ENCODE measurements at regions of chr12 and their contacts with region 1.

Region 1: DNA sequence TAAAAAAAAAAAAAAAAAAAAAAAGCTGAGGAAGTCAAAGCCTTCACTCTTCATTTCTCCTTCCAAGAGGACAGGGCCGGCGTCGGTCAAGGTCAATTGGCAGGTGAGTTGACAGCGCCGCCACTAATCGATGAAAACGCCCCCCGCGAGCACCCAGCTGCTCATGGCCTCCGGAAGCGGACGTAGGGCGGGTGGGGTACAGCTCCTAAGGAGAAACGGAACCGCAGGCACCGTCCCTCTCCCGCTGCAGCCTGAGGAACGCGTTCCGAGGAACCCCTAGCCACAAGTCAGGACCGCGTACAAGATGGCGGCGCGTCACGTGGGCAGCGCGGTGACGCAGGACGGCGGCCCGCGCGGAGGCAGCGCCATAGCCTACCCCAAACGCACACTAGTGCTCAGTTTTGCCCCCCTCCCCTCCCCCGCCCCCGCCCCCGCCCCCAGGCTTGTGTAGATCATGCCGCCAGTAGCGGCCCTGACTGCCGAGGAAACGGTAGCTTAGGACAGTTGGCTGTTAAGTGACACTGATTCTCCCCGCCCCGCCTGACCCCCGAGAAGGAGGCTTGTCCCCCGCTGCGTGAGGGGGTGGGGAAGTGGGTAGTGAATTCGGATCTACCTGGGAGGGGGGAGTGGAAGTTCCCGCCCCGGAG is at the start of gene ATF1:
- DNase-seq: peak; percentile 92
- ATAC-seq: peak; percentile 81
- H3K4me3 Mint-ChIP-seq: peak within 1 kb of the TSS; percentile 81
- H3K27ac Mint-ChIP-seq: peak within 1 kb of the TSS; percentile 89
- H3K4me1 Mint-ChIP-seq: peaks cover 30% of the 10 kb centered on the region
- H3K27me3 Mint-ChIP-seq: no peaks in the 10 kb centered on the region
- total RNA-seq, gene ATF1: 35.4 to 36.7 TPM

Region 2: GRCh38 chr12:50677858-50678257 is 85.9 kb before region 1 on chr12:
- CTCF ChIA-PET with region 1: no interaction called
- POLR2A ChIA-PET with region 1: no interaction called
- DNase-seq: no peak
- ATAC-seq: no peak
- H3K4me3 Mint-ChIP-seq: no peak overlapping the region
- H3K27ac Mint-ChIP-seq: no peak overlapping the region
- H3K4me1 Mint-ChIP-seq: no peaks in the 10 kb centered on the region
- H3K27me3 Mint-ChIP-seq: no peaks in the 10 kb centered on the region

Region 3: DNA sequence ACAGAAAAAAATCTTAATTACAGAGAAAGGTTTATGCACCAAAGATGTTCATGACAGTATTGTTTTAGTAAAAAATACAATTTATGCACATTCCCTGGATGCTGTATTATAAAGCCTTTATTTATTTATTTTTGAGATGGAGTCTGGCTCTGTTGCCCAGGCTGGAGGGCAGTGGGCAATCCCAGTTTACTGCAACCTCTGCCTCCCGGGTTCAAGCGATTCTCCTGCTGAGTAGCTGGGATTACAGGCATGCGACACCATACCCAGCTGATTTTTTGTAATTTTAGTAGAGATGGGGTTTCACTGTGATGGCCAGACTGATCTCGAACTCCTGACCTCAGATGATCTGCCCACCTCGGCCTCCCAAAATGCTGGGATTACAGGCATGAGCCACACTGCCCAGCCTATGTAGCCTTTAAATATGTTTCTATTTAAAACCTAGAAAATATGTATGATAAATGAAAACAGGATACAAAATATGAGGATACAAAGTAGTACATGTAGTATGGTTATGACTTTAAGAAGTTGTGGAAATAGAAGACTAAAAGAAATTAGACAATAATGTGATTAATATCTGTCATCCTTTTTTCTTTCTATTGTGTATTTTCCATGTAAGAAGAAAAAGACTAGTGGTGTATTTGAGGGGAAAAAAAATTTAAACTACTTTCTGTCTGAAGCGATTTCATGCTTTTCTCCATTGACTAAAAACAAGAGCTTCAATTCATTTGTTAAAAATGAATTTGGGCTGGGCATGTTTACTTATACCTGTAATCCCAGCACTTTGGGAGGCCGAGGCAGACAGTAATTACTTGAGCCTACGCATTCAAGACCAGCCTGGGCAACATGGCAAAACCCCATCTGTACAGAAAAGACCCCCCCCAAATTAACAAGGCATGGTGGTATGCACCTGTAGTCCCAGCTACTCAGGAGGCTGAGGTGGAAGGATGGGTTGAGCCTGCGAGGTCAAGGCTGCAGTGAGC is 13.3 kb after region 1 on chr12:
- CTCF ChIA-PET with region 1: interaction called, 22 read pairs
- POLR2A ChIA-PET with region 1: interaction called, 10 read pairs
- DNase-seq: peak; percentile 10
- ATAC-seq: no peak
- H3K4me3 Mint-ChIP-seq: no peak overlapping the region
- H3K27ac Mint-ChIP-seq: no peak overlapping the region
- H3K4me1 Mint-ChIP-seq: no peaks in the 10 kb centered on the region
- H3K27me3 Mint-ChIP-seq: no peaks in the 10 kb centered on the region

Region 4: DNA sequence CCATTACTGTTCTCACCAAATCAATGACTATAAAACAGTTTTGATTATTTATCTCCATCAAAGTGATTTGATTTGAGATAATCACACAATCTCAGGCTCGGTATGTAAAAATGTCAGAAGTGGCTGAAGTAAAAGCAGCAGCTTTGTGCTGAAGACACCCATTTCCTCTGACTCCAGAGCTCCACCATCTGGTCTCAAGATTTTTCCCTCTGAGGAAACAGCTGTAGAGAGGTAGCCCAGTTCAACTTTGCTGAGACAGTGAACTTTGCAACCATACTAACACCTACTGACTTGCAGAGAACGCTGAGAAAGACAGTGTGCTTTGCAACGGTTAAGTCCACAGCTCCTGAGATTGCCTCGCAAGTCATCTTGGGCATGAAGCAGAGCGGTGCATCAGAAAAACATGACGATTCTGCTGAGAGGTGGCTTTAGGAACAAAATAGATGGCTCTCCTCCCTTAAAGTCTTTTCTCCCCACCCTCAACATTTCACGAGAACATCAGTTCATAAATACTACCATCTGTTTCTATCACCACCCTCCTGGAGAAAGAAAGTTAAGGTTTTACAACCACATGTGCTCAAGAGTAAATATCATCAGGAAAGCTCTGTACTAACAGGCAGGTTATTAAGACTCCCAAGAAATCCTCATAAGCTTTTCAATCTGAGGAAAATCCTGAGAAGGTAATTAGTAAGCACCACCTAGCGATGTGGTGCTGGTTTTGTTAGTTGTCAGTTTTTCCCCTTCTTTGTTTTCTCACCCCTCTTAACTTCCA is 223.4 kb after region 1 on chr12:
- CTCF ChIA-PET with region 1: interaction called, 67 read pairs
- POLR2A ChIA-PET with region 1: interaction called, 4 read pairs
- DNase-seq: peak; percentile 57
- ATAC-seq: peak; percentile 69
- H3K4me3 Mint-ChIP-seq: no peak overlapping the region
- H3K27ac Mint-ChIP-seq: peak overlapping the region; percentile 45
- H3K4me1 Mint-ChIP-seq: peaks cover 12% of the 10 kb centered on the region
- H3K27me3 Mint-ChIP-seq: no peaks in the 10 kb centered on the region

Region 5: DNA sequence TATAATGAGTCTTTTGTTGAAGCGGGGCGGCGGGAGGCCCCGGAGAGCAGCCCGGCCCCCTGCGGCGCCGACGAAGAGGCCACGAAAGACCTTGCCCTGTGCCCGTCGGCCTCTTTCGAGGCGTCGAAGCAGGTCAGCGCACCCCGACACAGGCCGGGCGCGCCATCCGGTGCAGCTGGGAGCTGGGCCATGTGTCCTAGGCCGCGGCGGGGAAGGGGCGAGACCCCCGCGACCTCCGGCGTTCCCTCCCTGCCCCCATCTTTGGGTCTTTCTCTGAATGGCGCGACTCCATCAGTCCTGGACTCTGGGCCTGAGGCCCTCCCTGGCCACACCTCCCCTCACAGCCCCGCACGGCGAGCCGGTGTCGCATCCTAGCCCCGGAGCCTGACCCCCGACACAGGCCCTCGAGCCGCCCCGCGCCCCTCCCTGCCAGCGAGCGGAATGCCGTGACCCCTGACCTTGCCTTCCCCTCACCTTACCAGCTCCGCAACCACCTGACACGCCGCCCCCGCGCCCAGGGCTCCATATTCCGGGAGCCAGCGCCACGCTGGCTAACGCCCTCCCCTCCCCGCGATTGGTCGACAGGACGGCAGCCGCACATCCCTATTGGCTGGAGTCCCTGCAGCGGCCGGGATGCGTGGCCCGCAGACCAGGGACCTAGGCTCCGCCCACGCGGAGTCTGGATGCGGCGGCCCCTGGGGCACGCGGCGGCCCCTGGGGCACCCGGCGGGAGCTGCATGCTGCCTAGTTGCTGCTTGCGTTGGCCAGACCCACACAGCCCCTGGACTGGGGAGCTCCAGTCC is 262.3 kb after region 1 on chr12 and contains the start of gene SLC11A2:
- CTCF ChIA-PET with region 1: interaction called, 53 read pairs
- POLR2A ChIA-PET with region 1: interaction called, 14 read pairs
- DNase-seq: peak; percentile 94
- ATAC-seq: peak; percentile 96
- H3K4me3 Mint-ChIP-seq: peak within 1 kb of the TSS; percentile 95
- H3K27ac Mint-ChIP-seq: peak within 1 kb of the TSS; percentile 97
- H3K4me1 Mint-ChIP-seq: peaks cover 50% of the 10 kb centered on the region
- H3K27me3 Mint-ChIP-seq: peaks cover 11% of the 10 kb centered on the region
- total RNA-seq, gene SLC11A2: 29.9 to 36.1 TPM

Region 6: DNA sequence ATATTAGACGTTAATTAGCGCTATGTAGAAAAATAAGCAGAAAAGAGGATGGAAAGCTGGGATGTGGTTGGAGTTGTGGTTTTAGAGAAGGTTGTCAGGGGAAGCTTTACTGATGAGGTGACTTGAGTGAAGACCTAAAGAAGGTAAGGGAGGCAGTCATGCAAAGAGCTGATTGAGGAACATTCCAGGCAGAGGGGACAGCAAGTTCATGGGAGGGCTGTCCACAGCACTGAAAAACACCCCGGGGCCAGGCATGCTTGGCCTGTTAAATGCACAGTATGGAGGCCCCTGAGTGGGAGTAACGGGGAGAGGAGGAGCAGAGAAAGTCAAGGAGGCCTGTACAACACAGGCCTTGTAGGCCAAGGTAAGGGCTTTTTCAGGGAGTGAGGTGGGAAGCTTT is 490.8 kb after region 1 on chr12:
- CTCF ChIA-PET with region 1: interaction called, 11 read pairs
- POLR2A ChIA-PET with region 1: no interaction called
- DNase-seq: no peak
- ATAC-seq: no peak
- H3K4me3 Mint-ChIP-seq: no peak overlapping the region
- H3K27ac Mint-ChIP-seq: peak overlapping the region; percentile 33
- H3K4me1 Mint-ChIP-seq: peaks cover 11% of the 10 kb centered on the region
- H3K27me3 Mint-ChIP-seq: no peaks in the 10 kb centered on the region